GM12878 (cell line): ENCODE measurements at regions of chr4 and their contacts with region 1.

Region 1: GRCh38 chr4:24570574-24571236 is 13.6 kb downstream of the DHX15 start:
- DNase-seq: no peak
- ATAC-seq: peak; percentile 58
- H3K4me3 ChIP-seq: no peak overlapping the region
- H3K27ac ChIP-seq: no peak overlapping the region
- H3K4me1 ChIP-seq: peaks cover 3% of the 10 kb centered on the region
- H3K27me3 ChIP-seq: no peaks in the 10 kb centered on the region
- CTCF ChIP-seq: no peak
- EP300 ChIP-seq: no peak
- POLR2A ChIP-seq: no peak
- RAD21 ChIP-seq: no peak

Region 2: DNA sequence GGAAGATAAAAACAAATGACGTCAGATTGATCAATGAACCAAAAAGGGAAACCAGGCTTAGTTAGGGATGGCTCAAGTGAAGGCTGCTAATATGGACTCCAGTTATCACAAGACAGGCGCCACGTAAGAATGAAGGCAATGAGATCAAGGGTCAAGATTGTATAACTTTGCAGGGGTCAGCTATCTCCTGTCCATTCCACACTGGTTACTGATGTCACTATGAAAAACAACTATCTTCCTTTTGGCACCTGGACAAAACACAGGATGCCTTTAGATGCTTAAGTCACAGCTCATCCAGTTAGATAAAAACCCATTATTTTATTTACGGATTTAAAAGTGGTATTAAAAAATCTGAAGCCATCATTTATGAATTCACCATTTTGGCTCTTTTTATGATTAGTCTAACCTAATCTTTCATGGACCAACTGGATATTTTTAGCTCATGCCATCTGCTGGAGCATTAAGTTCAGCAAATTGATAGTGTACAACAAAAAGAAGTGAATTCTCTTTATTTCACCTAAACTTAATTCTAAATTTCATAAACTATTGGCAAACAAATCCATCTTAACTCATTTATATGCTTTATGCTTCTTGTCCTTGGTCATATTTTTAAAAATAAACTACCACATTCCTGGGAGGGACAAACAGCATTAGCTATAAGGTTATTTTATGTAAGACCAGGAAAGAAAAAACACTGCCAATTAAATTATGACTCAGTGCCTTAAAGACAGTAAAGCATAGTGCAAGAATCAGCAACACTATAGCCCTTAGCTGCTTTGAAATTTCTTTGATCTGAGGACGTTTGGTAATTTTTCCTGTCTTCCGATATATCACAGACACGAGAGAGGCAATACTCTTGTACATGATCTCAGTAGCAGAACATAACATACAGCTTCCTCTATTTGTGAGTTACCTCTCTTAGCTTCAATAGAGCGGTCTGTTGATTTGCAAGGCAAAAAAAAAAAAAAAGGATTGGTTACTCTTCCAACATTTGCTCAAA is 13.4 kb before region 1 on chr4:
- CTCF ChIA-PET with region 1: interaction called, 26 read pairs
- POLR2A ChIA-PET with region 1: interaction called, 7 read pairs
- RAD21 ChIA-PET with region 1: interaction called, 3 read pairs
- SMC1A ChIA-PET with region 1: interaction called, 23 read pairs
- in situ Hi-C with region 1: no loop called
- intact Hi-C with region 1: loop called (anchors 1 kb)
- DNase-seq: no peak
- ATAC-seq: peak; percentile 57
- H3K4me3 ChIP-seq: no peak overlapping the region
- H3K27ac ChIP-seq: no peak overlapping the region
- H3K4me1 ChIP-seq: no peaks in the 10 kb centered on the region
- H3K27me3 ChIP-seq: no peaks in the 10 kb centered on the region
- CTCF ChIP-seq: no peak
- EP300 ChIP-seq: no peak
- POLR2A ChIP-seq: no peak
- RAD21 ChIP-seq: no peak